Esophagus muscularis mucosa (tissue), 4 donors: ENCODE measurements at regions of chrX and their contacts with region 1.

Region 1: GRCh38 chrX:45515262-45516215 is 314.9 kb upstream of the DIPK2B start:
- DNase-seq: no peak
- H3K4me3 ChIP-seq: no peak overlapping the region
- H3K27ac ChIP-seq: peak overlapping the region; percentile 45 to 64 (median 64)
- H3K4me1 ChIP-seq: peaks cover 4 to 45% (median 33%) of the 10 kb centered on the region in 4 donors
- H3K27me3 ChIP-seq: peaks cover 0 to 2% (median 0%) of the 10 kb centered on the region in 4 donors
- CTCF ChIP-seq: peak; percentile 44 to 50 (median 47)
- EP300 ChIP-seq: no peak
- POLR2A ChIP-seq: no peak

Region 2: GRCh38 chrX:45449982-45450381 is 65.6 kb before region 1 on chrX:
- intact Hi-C with region 1: no loop called
- DNase-seq: no peak
- H3K4me3 ChIP-seq: no peak overlapping the region
- H3K27ac ChIP-seq: no peak overlapping the region
- H3K4me1 ChIP-seq: peaks cover 0 to 24% (median 5%) of the 10 kb centered on the region in 4 donors
- H3K27me3 ChIP-seq: no peaks in the 10 kb centered on the region
- CTCF ChIP-seq: no peak
- EP300 ChIP-seq: no peak
- POLR2A ChIP-seq: no peak

Region 3: GRCh38 chrX:45769761-45770582 is 254.4 kb after region 1 on chrX:
- intact Hi-C with region 1: loop called (anchors 10 kb)
- DNase-seq: peak; percentile 92
- H3K4me3 ChIP-seq: peak overlapping the region; percentile 42 to 60 (median 48)
- H3K27ac ChIP-seq: peak overlapping the region; percentile 68 to 78 (median 72)
- H3K4me1 ChIP-seq: peaks cover 0 to 24% (median 11%) of the 10 kb centered on the region in 4 donors
- H3K27me3 ChIP-seq: no peaks in the 10 kb centered on the region
- CTCF ChIP-seq: no peak
- EP300 ChIP-seq: no peak
- POLR2A ChIP-seq: no peak

Region 4: GRCh38 chrX:46408553-46409407 is 893.2 kb after region 1 on chrX:
- intact Hi-C with region 1: loop called (anchors 10 kb)
- DNase-seq: no peak
- H3K4me3 ChIP-seq: no peak overlapping the region
- H3K27ac ChIP-seq: no peak overlapping the region
- H3K4me1 ChIP-seq: no peaks in the 10 kb centered on the region
- H3K27me3 ChIP-seq: no peaks in the 10 kb centered on the region
- CTCF ChIP-seq: peak; percentile 68 to 78 (median 75)
- EP300 ChIP-seq: no peak
- POLR2A ChIP-seq: no peak